KBM-7 (cell line): ENCODE measurements at regions of chrX and their contacts with region 1.

Region 1: DNA sequence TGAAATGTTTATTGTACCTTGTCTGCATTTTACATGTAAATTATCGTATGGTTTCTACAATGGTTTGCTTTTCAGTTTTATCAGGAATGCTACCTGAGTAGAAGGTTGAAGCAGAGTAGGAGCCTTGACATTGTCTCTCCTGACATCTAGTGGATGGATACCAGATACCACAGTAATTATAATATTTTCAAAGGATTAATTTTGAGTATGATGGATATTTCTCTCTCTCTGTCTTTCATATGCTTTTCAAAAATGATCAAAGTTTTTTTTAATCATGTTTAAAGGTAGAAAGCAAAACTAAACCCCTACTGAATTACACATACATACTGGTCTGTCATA is 109.4 kb upstream of the KLHL13 start:
- DNase-seq: peak; percentile 53

Region 2: GRCh38 chrX:117607561-117607960 is 618.5 kb before region 1 on chrX:
- in situ Hi-C with region 1: no loop called
- DNase-seq: no peak

Region 3: GRCh38 chrX:117996918-117997480 is 229.1 kb before region 1 on chrX:
- in situ Hi-C with region 1: loop called (anchors 25 kb)
- DNase-seq: peak; percentile 6

Region 4: GRCh38 chrX:118383120-118383519 is 157.1 kb after region 1 on chrX:
- in situ Hi-C with region 1: no loop called
- DNase-seq: no peak